Endothelial cell of umbilical vein (primary cell): ENCODE measurements at regions of chr2 and their contacts with region 1.

Region 1: GRCh38 chr2:217922101-217923006 is 80.4 kb downstream of the TNS1 start:
- DNase-seq: no peak
- H3K4me3 ChIP-seq: no peak overlapping the region
- H3K27ac ChIP-seq: no peak overlapping the region
- H3K4me1 ChIP-seq: peaks cover 16% of the 10 kb centered on the region
- H3K27me3 ChIP-seq: no peaks in the 10 kb centered on the region
- CTCF ChIP-seq: peak in 1 of 2 donors; percentile 32
- POLR2A ChIP-seq: no peak

Region 2: DNA sequence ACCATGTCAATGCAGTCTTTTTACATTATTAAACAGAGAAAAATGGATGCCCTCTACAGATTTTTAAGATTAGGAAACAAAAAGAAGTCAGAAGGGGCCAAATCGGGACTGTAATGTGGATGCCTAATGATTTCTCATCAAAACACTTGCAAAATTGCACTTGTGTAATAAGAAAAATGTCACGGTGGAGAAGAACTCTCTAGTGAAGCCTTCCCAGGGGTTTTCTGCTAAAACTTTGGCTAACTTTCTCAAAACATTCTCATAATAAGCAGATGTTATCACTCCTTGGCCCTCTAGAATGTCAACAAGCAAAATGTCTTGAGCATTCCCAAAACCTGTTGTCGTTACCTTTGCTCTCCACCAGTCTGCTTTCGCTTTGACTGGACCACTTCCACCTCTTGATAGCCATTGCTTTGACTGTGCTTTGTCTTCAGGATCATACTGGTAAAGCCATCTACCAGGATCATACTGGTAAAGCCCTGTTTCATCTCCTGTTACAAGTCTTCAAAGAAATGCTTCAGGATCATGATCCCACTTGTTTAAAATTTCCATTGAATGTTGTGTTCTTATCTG is 146.3 kb before region 1 on chr2:
- CTCF ChIA-PET with region 1: no interaction called
- POLR2A ChIA-PET with region 1: no interaction called
- dilution Hi-C with region 1: no loop called
- intact Hi-C with region 1: no loop called
- DNase-seq: no peak
- H3K4me3 ChIP-seq: no peak overlapping the region
- H3K27ac ChIP-seq: no peak overlapping the region
- H3K4me1 ChIP-seq: no peaks in the 10 kb centered on the region
- H3K27me3 ChIP-seq: peaks cover 0 to 6% of the 10 kb centered on the region in 2 experiments
- CTCF ChIP-seq: no peak
- POLR2A ChIP-seq: no peak

Region 3: DNA sequence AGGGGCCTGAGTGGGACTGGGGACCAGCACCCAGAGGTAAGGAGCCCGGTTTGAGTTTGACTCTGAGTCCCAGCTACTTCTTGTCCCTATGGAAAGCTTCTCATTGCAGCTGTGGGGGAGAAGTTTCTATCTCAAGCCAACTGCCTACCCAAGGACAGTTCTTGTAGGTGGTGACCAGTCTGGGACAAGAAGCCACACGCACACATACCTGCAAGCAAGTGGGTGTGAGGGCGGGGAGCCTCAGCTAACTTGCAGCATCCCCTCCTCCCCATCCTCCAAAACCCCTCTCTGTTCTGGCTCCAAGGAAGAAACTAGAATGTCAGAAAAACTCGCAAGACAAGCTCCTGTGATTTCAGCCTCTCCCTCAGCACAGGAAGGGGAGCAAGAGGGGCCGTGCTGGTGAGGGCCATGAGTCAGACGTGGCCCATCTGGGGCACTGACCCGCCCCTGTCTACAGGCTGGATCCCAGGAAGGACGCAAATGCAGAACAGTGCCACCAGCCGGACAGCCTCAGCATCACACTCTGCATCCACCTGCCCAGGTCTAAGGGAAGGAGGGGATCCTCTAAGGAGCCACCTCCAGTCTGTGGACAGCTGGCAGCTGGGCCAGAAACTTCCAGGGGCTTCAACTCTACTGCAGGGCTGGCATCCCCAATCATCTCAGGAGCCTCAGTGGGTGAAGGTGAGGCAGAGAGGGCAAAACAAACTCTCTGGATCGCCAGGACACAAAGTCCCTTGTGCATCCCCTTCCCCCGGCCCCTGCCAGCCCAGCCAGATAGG is 22.9 kb before region 1 on chr2:
- CTCF ChIA-PET with region 1: interaction called, 4 read pairs
- POLR2A ChIA-PET with region 1: interaction called, 4 read pairs
- dilution Hi-C with region 1: no loop called
- intact Hi-C with region 1: loop called (anchors 2 kb)
- DNase-seq: no peak
- H3K4me3 ChIP-seq: no peak overlapping the region
- H3K27ac ChIP-seq: no peak overlapping the region
- H3K4me1 ChIP-seq: peaks cover 35% of the 10 kb centered on the region
- H3K27me3 ChIP-seq: no peaks in the 10 kb centered on the region
- CTCF ChIP-seq: peak; percentile 47 to 63
- POLR2A ChIP-seq: no peak

Region 4: DNA sequence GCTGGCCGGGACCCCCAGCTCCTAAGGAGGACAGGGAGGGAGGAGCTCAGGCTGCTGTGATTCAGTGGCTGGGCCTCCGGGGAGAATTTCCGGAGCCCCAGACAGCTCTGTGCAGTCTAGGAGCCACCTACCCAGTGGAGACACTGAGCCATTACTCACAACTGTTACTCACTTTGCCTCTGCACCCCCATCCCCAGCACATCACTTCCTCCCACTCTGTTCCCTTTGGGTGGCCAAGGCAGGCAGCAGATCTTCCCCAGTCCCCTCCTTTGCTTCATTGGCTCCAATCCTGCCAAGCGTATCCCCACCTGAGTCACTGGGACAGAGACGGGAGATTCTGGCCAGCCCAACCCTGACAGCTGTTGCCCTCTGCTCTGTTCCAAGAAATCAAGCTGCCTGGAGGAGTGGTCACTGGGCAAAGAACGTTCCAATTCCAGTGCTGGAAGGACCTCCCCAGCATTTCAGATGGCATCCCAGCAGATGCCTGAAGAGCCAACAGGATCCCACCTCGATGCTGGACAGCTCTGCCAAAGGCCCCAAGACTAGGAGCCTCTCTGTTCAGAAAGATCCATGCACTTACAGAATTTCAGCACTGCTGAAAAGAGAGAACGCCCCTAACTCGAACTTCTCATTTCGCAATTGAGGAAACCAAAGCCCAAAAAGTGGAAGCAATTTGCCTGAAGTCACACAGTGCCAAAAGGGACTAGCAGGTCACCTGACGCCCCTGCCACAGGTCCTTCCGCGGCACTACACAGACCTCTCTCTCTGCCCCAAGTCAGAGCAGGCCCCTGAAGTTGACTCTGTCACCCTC is 12.2 kb after region 1 on chr2:
- CTCF ChIA-PET with region 1: interaction called, 15 read pairs
- POLR2A ChIA-PET with region 1: no interaction called
- dilution Hi-C with region 1: no loop called
- intact Hi-C with region 1: loop called (anchors 2 kb)
- DNase-seq: peak; percentile 53
- H3K4me3 ChIP-seq: no peak overlapping the region
- H3K27ac ChIP-seq: peak overlapping the region; percentile 81
- H3K4me1 ChIP-seq: peaks cover 45% of the 10 kb centered on the region
- H3K27me3 ChIP-seq: no peaks in the 10 kb centered on the region
- CTCF ChIP-seq: no peak
- POLR2A ChIP-seq: no peak